A549 (cell line): ENCODE measurements at regions of chr12 and their contacts with region 1.

Region 1: GRCh38 chr12:52235822-52236692 is 3.0 kb downstream of the KRT7 start:
- DNase-seq: peak in 1 of 2 experiments; percentile 24
- ATAC-seq: no peak
- H3K4me3 ChIP-seq: peak overlapping the region; percentile 93
- H3K27ac ChIP-seq: peak overlapping the region; percentile 97
- H3K4me1 ChIP-seq: peaks cover 73% of the 10 kb centered on the region
- CTCF ChIP-seq: no peak
- EP300 ChIP-seq: no peak
- POLR2A ChIP-seq: no peak
- RAD21 ChIP-seq: no peak

Region 2: GRCh38 chr12:51911788-51912711 is 324.0 kb before region 1 on chr12:
- CTCF ChIA-PET with region 1: no interaction called
- POLR2A ChIA-PET with region 1: no interaction called
- DNase-seq: no peak
- ATAC-seq: peak in 1 of 2 experiments; percentile 36; a peak in 3 of 6 replicates
- H3K4me3 ChIP-seq: no peak overlapping the region
- H3K27ac ChIP-seq: no peak overlapping the region
- H3K4me1 ChIP-seq: no peaks in the 10 kb centered on the region
- CTCF ChIP-seq: no peak
- EP300 ChIP-seq: no peak
- POLR2A ChIP-seq: no peak
- RAD21 ChIP-seq: no peak

Region 3: DNA sequence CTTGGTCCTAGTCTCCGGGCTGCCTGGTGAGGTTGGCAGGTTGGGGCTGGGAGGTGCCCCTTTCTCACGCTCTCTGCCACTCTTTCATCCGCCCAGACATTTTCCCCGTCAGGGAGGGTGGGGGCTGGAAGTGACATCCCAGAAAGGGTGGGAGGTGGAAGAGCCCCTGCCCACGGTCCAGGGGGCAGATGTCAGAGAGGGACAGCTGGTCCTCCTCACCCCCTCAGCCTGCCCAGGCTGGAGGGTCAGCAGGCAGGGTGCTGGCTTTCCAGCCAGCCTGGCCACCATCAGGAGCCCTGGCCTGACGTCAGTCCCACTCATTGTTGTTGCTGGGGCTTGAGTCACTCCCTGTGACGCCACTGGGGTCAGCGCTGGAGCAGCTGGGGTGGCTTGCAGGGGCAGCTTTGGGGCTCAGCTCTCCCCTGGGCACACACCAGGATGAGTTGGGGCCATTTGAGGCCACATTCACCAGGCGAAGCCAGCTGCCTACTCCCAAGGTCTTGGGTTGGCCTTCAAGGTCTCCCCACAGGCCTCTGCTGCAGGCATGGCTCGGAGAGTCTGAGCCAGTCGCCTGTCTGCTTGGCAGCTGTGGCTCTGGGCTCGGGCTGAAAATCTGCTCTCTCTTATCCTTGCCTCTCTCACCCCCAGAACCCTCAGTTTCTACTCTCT is 171.9 kb before region 1 on chr12:
- CTCF ChIA-PET with region 1: no interaction called
- POLR2A ChIA-PET with region 1: no interaction called
- DNase-seq: peak in 1 of 2 experiments; percentile 70
- ATAC-seq: 0 out of 6 replicates have a peak, but pooled peaks of 1 of the 2 experiments have one; percentile 0
- H3K4me3 ChIP-seq: no peak overlapping the region
- H3K27ac ChIP-seq: peak overlapping the region; percentile 53 to 81; a peak in 5 of 6 replicates
- H3K4me1 ChIP-seq: peaks cover 16% of the 10 kb centered on the region
- CTCF ChIP-seq: no peak
- EP300 ChIP-seq: no peak
- POLR2A ChIP-seq: no peak
- RAD21 ChIP-seq: no peak

Region 4: DNA sequence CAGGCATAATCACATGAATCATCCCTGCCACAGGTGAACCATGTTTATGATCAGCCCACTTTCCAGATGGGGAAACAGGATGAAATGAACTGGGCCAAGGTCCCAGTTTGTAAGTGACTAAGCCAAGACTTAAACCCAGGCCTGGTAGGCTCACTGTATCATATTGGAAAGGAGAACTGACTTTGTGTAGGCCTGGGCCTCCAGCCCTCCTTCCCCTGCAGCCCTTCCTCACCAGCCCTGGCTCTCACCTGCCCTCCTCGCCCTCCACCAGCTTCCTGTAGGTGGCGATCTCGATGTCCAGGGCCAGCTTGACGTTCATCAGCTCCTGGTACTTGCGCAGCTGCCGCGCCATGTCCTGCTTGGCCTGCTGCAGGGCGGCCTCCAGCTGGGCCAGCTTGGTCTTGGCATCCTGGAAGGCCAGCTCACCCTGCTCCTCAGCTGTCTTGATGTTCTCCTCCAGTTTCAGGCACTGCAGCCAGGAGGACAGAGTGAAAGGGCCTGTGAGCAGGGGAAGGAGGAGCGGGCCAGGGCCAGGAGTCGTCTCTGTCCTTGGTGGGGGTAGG is 64.0 kb before region 1 on chr12:
- CTCF ChIA-PET with region 1: interaction called, 11 read pairs
- POLR2A ChIA-PET with region 1: interaction called, 5 read pairs
- DNase-seq: peak; percentile 66 to 87
- ATAC-seq: peak; percentile 35 to 72
- H3K4me3 ChIP-seq: no peak overlapping the region
- H3K27ac ChIP-seq: peak overlapping the region; percentile 70 to 85
- H3K4me1 ChIP-seq: peaks cover 82% of the 10 kb centered on the region
- CTCF ChIP-seq: peak; percentile 63
- EP300 ChIP-seq: no peak
- POLR2A ChIP-seq: no peak
- RAD21 ChIP-seq: peak; percentile 64 to 73

Region 5: GRCh38 chr12:52285172-52285745 is 49.2 kb after region 1 on chr12:
- CTCF ChIA-PET with region 1: interaction called, 29 read pairs
- POLR2A ChIA-PET with region 1: interaction called, 54 read pairs
- DNase-seq: peak; percentile 58 to 84
- ATAC-seq: no peak
- H3K4me3 ChIP-seq: peak overlapping the region; percentile 59
- H3K27ac ChIP-seq: peak overlapping the region; percentile 96 to 100
- H3K4me1 ChIP-seq: peaks cover 57% of the 10 kb centered on the region
- CTCF ChIP-seq: no peak
- EP300 ChIP-seq: peak; percentile 90 to 96; a peak in 4 of 5 replicates
- POLR2A ChIP-seq: peak; percentile 80
- RAD21 ChIP-seq: peak in 1 of 2 experiments; percentile 15; a peak in 1 of 5 replicates